ENCODE measurements at regions of chr3 and their contacts with region 1.

Region 1: DNA sequence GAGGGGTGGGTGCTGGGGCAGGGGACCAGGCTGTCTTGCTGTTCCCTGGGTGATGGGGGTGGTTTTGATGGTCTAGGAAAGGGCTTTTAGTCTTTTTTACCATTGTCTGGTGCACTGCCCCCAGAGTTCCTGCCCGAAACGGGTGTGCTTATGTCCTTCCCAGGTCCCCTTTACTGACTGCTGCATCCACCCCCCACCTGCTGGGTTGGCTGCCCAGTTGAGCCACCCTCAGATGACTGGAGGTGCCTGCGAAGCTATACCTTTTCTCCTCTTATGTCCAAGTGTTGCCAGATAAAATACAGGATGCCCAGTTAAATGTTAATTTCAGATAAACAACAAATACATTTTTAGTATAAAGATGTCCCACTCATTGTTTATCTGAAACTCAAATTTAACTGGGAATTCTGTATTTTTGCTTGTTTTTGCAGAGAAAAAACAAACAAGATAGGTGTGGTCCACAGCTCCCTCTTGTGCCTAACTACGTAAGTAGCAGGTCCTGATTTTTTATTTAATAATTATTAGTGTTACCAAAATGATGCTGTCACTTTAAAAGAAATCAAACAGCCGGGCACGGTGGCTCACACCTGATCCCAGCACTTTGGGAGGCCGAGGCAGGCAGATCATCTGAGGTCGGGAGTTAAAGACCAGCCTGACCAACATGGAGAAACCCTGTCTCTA is 6.1 kb upstream of the RPP14 start:
- DNase-seq: no peak
- ATAC-seq: peak in 3 of 4 donors; percentile 60 to 72 (median 69)
- H3K4me3 ChIP-seq: no peak overlapping the region
- H3K27ac ChIP-seq: no peak overlapping the region
- H3K4me1 ChIP-seq: no peaks in the 10 kb centered on the region
- H3K27me3 ChIP-seq: no peaks in the 10 kb centered on the region
- CTCF ChIP-seq: peak in 3 of 4 donors; percentile 14 to 40 (median 39)

Region 2: GRCh38 chr3:58179235-58180098 is 120.5 kb before region 1 on chr3:
- intact Hi-C with region 1: loop called in 2 of 3 experiments (anchors 5 to 10 kb)
- DNase-seq: peak in 1 of 6 donors; percentile 53
- ATAC-seq: no peak
- H3K4me3 ChIP-seq: no peak overlapping the region
- H3K27ac ChIP-seq: no peak overlapping the region
- H3K4me1 ChIP-seq: peaks cover 23 to 33% (median 29%) of the 10 kb centered on the region in 3 donors
- H3K27me3 ChIP-seq: no peaks in the 10 kb centered on the region
- CTCF ChIP-seq: no peak

Region 3: DNA sequence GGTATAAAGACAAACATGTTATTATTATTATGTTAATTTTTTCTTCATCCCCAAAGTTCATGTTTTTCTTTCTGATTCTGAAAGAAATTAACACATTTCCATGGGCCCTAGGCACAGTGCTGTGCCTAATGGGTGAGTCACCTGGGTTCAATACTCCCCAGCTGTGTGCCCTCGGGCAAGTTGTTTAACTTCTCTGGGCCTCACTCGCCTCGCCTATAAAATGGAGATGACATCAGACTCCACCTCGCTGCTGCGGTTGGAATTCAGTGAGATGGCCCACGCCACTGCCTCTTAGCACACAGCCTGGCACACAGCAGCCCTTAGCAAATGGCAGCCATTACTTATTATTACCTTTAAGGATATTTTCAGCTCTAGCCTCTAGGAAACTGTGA is 111.8 kb before region 1 on chr3:
- intact Hi-C with region 1: loop called (anchors 5 to 10 kb)
- DNase-seq: peak in 1 of 6 donors; percentile 21
- ATAC-seq: no peak
- H3K4me3 ChIP-seq: no peak overlapping the region
- H3K27ac ChIP-seq: no peak overlapping the region
- H3K4me1 ChIP-seq: no peaks in the 10 kb centered on the region
- H3K27me3 ChIP-seq: no peaks in the 10 kb centered on the region
- CTCF ChIP-seq: no peak

Region 4: GRCh38 chr3:58383476-58383875 is 83.5 kb after region 1 on chr3:
- intact Hi-C with region 1: no loop called
- DNase-seq: no peak
- ATAC-seq: peak; percentile 30 to 75 (median 64)
- H3K4me3 ChIP-seq: no peak overlapping the region
- H3K27ac ChIP-seq: peak overlapping the region in 2 of 4 donors; percentile 4 to 57
- H3K4me1 ChIP-seq: peaks cover 0 to 17% (median 16%) of the 10 kb centered on the region in 3 donors
- H3K27me3 ChIP-seq: no peaks in the 10 kb centered on the region
- CTCF ChIP-seq: no peak

Measured in pancreas (tissue), 10 donors.